Activated T-helper 1 cell treated with anti-CD3 and anti-CD28 coated beads, Interleukin-12 subunit alpha, Interleukin-12 subunit beta, Interleukin-2, Interleukin-4 antibody, amounts not matched to agents 30 ng/mL and 10 ng/mL and 1 ng/mL, durations not matched to agents 14 hours and 24 hours and 36 hours (primary cell): ENCODE measurements at regions of chr2 and their contacts with region 1.

Region 1: DNA sequence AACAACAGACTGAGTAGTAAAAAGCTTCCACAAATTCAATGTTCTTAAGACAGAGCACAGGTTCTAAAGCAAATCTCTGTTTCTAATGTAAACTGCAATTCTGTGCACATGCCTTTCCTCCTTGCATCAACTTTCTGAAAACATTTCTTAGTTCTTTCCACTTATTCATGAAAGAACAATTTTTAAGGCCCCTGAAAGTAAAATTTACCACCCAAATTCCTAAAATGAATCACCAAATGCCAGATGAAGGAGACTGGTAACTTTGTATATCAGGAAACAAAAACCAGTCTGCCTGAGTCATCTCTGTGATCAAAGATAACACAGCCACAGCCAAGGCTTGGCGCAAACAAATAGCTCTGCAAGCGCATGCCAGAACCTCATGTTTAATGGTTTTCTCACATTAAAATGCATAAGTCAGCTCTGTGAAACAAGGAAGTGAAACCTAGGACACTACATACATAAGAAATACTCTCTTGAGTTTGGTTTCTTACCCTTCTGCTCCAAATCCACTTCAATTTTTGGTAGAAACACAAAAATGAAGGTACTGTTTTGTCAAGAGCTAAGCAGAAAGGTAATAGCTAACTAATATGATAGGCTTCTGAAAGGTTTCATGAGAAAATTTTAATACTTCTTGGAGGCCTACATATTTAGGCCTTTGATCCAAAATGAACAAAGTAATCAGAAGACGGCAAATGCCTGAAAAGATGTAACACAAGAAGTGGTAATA is 169.4 kb downstream of the THADA start:
- DNase-seq: peak; percentile 75
- H3K4me3 Mint-ChIP-seq: peak overlapping the region; percentile 40
- H3K27ac Mint-ChIP-seq: peak overlapping the region; percentile 26
- H3K4me1 Mint-ChIP-seq: peaks cover 39% of the 10 kb centered on the region
- H3K27me3 Mint-ChIP-seq: peaks cover 2% of the 10 kb centered on the region

Region 2: GRCh38 chr2:42792583-42793333 is 633.7 kb before region 1 on chr2 and contains the start of gene HAAO:
- intact Hi-C with region 1: no loop called
- DNase-seq: no peak
- H3K4me3 Mint-ChIP-seq: peak within 1 kb of the TSS; percentile 76
- H3K27ac Mint-ChIP-seq: peak within 1 kb of the TSS; percentile 59
- H3K4me1 Mint-ChIP-seq: peaks cover 26% of the 10 kb centered on the region
- H3K27me3 Mint-ChIP-seq: peaks cover 38% of the 10 kb centered on the region
- total RNA-seq, gene HAAO: 0.37 and 0.86 TPM in 2 replicates

Region 3: GRCh38 chr2:43174368-43174916 is 252.0 kb before region 1 on chr2:
- intact Hi-C with region 1: loop called (anchors 1 kb)
- DNase-seq: peak; percentile 76
- H3K4me3 Mint-ChIP-seq: peak overlapping the region; percentile 32
- H3K27ac Mint-ChIP-seq: peak overlapping the region; percentile 89
- H3K4me1 Mint-ChIP-seq: peaks cover 75% of the 10 kb centered on the region
- H3K27me3 Mint-ChIP-seq: no peaks in the 10 kb centered on the region

Region 4: GRCh38 chr2:43293744-43294695 is 132.4 kb before region 1 on chr2:
- intact Hi-C with region 1: loop called (anchors 1 kb)
- DNase-seq: peak; percentile 66
- H3K4me3 Mint-ChIP-seq: peak overlapping the region; percentile 35
- H3K27ac Mint-ChIP-seq: peak overlapping the region; percentile 77
- H3K4me1 Mint-ChIP-seq: peaks cover 34% of the 10 kb centered on the region
- H3K27me3 Mint-ChIP-seq: no peaks in the 10 kb centered on the region

Region 5: GRCh38 chr2:43402452-43402944 is 24.0 kb before region 1 on chr2:
- intact Hi-C with region 1: loop called (anchors 1 kb)
- DNase-seq: no peak
- H3K4me3 Mint-ChIP-seq: no peak overlapping the region
- H3K27ac Mint-ChIP-seq: no peak overlapping the region
- H3K4me1 Mint-ChIP-seq: peaks cover 21% of the 10 kb centered on the region
- H3K27me3 Mint-ChIP-seq: no peaks in the 10 kb centered on the region

Region 6: DNA sequence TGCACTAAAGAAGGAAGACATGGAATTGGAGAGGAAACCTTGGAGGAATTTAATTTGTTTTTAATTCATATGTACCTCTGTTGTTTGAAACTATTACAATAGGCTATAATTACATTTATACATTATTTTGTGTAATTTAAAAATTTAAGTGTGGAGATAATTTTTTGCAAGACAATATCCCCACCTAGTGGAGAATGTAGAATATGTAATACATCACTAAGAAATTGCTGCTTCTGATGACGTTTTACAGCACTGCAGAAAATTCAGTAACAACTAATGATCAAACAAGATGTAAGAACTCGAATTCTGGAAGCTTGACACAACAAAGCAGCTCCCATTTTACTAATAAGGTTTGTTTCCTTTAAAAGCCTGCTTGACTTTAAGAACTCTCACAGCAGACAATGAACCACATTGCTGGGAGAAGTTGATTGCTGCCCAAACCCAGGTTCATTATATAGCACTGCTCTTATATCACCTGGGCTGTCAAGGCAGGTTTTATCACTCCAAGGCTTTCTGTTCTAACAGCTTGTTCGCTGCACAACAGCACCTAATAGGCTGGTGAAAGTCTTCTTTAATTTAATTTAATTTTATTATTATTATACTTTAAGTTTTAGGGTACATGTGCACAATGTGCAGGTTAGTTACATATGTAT is 115.9 kb after region 1 on chr2:
- intact Hi-C with region 1: loop called (anchors 1 kb)
- DNase-seq: no peak
- H3K4me3 Mint-ChIP-seq: no peak overlapping the region
- H3K27ac Mint-ChIP-seq: no peak overlapping the region
- H3K4me1 Mint-ChIP-seq: peaks cover 18% of the 10 kb centered on the region
- H3K27me3 Mint-ChIP-seq: no peaks in the 10 kb centered on the region

Region 7: DNA sequence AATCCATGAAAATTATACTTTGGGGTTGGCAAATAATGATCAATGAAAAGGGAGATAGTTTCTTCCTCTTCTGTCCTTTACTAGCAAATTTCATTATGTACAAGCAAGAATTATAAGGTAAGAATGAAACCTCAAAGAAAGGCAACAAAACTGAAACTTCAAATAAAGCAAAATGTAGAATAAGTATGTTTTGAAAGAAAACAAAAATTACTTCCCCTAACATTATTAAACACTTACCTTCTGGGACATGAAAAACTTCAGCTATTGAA is 139.9 kb after region 1 on chr2:
- intact Hi-C with region 1: no loop called
- DNase-seq: no peak
- H3K4me3 Mint-ChIP-seq: peak overlapping the region; percentile 6
- H3K27ac Mint-ChIP-seq: peak overlapping the region; percentile 19
- H3K4me1 Mint-ChIP-seq: peaks cover 82% of the 10 kb centered on the region
- H3K27me3 Mint-ChIP-seq: no peaks in the 10 kb centered on the region

Region 8: GRCh38 chr2:43773876-43774613 is 347.6 kb after region 1 on chr2 and contains the start of gene DYNC2LI1:
- intact Hi-C with region 1: loop called (anchors 10 kb)
- DNase-seq: peak; percentile 71
- H3K4me3 Mint-ChIP-seq: peak within 1 kb of the TSS; percentile 92
- H3K27ac Mint-ChIP-seq: peak within 1 kb of the TSS; percentile 79
- H3K4me1 Mint-ChIP-seq: peaks cover 19% of the 10 kb centered on the region
- H3K27me3 Mint-ChIP-seq: peaks cover 3% of the 10 kb centered on the region
- total RNA-seq, gene DYNC2LI1: 6.2 and 6.6 TPM in 2 replicates